ENCODE measurements at regions of chr2 and their contacts with region 1.

Region 1: DNA sequence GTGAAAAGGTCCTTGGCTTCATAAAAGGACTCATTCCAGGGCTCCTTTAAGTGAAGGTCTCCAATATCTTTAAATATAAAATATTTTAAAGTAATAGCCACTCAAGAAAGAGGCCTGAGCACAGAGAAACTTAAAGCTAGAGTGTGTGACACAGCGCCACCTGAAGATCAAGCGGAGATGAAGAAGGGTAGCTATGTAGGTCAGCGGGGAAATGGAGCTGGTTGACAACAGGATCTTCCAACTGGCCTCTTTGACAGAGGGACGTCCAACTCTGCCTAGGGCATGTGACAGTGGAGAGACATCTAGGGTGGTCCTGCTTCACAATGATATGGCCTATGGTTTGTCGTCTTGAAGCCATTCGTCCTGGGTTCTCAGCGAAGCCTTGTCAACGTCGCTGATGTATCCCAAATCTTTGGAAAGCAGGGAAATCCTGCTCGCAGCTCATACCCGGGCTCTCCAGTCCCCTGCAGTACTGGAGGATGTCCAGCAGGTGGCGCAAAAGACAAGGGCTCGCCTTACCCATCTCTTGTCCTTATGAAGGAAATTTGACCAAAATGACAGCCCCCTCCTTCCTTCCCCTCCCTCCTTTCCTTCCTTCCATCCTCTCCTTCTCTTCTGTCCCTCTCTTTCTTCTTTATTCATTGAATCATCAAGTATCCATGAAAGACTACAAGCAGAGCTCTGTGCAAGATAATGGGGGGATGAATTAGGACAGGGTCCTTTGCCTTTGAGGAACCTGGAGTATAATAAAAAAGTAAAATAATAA is 59.6 kb downstream of the LONRF2 start:
- DNase-seq: peak; percentile 68 to 80
- H3K4me3 ChIP-seq: no peak overlapping the region
- H3K27ac ChIP-seq: no peak overlapping the region
- H3K4me1 ChIP-seq: no peaks in the 10 kb centered on the region
- H3K27me3 ChIP-seq: no peaks in the 10 kb centered on the region
- CTCF ChIP-seq: peak; percentile 93 to 98 (median 94)
- POLR2A ChIP-seq: no peak

Region 2: DNA sequence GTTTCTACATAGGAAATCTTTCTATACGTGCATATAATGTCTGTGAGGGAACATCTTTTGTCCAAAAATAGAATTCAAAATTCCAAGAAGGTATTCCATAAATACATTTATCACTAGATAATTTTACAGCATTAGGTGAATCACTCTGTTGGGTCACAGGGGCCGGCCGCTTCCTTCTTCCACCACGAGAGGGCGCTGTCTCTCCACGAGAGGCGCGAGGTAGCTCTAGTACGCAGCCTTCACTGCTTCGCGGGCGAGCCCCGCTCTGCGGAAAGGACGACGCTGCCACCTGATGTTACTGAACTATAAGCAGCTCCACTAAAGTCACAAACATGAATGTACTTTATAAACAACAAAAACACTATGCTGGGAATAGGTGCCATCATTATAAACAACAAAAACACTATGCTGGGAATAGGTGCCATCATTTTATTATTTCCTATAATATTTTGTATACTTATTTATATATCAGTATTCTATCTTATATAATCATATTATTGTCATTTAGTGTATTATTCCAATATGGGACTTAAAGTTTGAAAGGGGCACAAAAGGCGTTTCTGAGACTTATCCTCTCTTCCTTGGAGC is 703.6 kb before region 1 on chr2:
- intact Hi-C with region 1: loop called (anchors 5 kb)
- DNase-seq: peak; percentile 65 to 89
- H3K4me3 ChIP-seq: no peak overlapping the region
- H3K27ac ChIP-seq: no peak overlapping the region
- H3K4me1 ChIP-seq: no peaks in the 10 kb centered on the region
- H3K27me3 ChIP-seq: no peaks in the 10 kb centered on the region
- CTCF ChIP-seq: peak; percentile 92 to 98 (median 96)
- POLR2A ChIP-seq: no peak

Region 3: DNA sequence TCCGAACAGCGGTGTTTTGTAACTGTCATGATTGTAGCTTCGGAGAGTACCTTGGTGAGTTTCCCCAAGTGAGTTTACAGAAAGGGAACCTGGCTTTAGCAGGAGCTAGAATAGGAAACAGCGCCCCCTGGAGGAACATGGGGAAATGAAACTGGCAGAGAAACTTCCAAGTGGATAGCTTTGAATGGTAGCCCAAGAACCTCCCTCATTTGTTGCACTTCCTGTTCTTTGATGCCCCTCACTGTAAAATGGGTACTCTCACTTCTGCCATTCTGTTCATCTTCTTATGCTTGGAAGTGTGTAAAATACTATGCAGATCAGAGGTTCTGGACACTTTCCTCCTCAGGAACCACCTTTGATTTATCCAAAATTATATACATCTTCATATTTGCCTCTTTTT is 118.5 kb after region 1 on chr2:
- intact Hi-C with region 1: loop called (anchors 10 kb)
- DNase-seq: peak; percentile 63 to 81
- H3K4me3 ChIP-seq: no peak overlapping the region
- H3K27ac ChIP-seq: no peak overlapping the region
- H3K4me1 ChIP-seq: no peaks in the 10 kb centered on the region
- H3K27me3 ChIP-seq: no peaks in the 10 kb centered on the region
- CTCF ChIP-seq: peak; percentile 72 to 89 (median 87)
- POLR2A ChIP-seq: no peak

Region 4: DNA sequence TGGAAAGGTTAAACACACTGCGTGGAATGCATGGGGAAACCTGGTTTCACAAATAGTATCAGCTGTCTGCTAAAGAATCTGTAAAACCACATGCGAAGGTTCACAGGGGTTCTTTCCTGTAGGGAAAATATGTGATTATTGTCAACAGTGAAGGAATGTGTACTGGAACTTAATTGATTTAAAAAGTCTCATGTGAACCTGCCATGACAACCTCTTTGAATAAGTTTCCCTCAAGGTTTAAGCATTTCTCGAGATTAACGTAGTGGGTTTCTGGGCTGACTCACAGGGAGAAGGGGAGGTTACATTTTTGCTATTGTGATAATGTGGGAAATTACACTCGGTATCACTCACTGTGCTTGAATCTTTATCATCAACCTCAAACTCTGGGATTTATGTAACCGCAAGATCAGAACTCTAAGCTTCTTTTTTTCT is 1851.6 kb after region 1 on chr2:
- intact Hi-C with region 1: no loop called
- DNase-seq: no peak
- H3K4me3 ChIP-seq: no peak overlapping the region
- H3K27ac ChIP-seq: no peak overlapping the region
- H3K4me1 ChIP-seq: no peaks in the 10 kb centered on the region
- H3K27me3 ChIP-seq: no peaks in the 10 kb centered on the region
- CTCF ChIP-seq: no peak
- POLR2A ChIP-seq: no peak